ENCODE measurements at regions of chr1 and their contacts with region 1.

Region 1: GRCh38 chr1:182084487-182085316 is 23.2 kb upstream of the ZNF648 start:
- DNase-seq: peak; percentile 61 to 96 (median 90)
- H3K4me3 ChIP-seq: peak overlapping the region in 13 of 59 donors; percentile 1 to 37 (median 9)
- H3K27ac ChIP-seq: peak overlapping the region in 55 of 59 donors; percentile 17 to 88 (median 71)
- H3K27me3 ChIP-seq: no peaks in the 10 kb centered on the region
- CTCF ChIP-seq: peak; percentile 77 to 99 (median 90)

Region 2: GRCh38 chr1:182143154-182143657 is 58.5 kb after region 1 on chr1:
- intact Hi-C with region 1: loop called in 1 of 2 experiments (anchors 2 kb)
- DNase-seq: peak; percentile 86 to 96 (median 92)
- H3K4me3 ChIP-seq: peak overlapping the region in 2 of 59 donors; percentile 17 to 19
- H3K27ac ChIP-seq: peak overlapping the region; percentile 82 to 98 (median 94)
- H3K27me3 ChIP-seq: no peaks in the 10 kb centered on the region
- CTCF ChIP-seq: peak; percentile 92 to 99 (median 97)

Region 3: GRCh38 chr1:182397771-182398393 is 313.2 kb after region 1 on chr1:
- intact Hi-C with region 1: loop called (anchors 1 kb)
- DNase-seq: no peak
- H3K4me3 ChIP-seq: no peak overlapping the region
- H3K27ac ChIP-seq: peak overlapping the region in 12 of 59 donors; percentile 9 to 99 (median 80)
- H3K27me3 ChIP-seq: no peaks in the 10 kb centered on the region
- CTCF ChIP-seq: no peak

Region 4: DNA sequence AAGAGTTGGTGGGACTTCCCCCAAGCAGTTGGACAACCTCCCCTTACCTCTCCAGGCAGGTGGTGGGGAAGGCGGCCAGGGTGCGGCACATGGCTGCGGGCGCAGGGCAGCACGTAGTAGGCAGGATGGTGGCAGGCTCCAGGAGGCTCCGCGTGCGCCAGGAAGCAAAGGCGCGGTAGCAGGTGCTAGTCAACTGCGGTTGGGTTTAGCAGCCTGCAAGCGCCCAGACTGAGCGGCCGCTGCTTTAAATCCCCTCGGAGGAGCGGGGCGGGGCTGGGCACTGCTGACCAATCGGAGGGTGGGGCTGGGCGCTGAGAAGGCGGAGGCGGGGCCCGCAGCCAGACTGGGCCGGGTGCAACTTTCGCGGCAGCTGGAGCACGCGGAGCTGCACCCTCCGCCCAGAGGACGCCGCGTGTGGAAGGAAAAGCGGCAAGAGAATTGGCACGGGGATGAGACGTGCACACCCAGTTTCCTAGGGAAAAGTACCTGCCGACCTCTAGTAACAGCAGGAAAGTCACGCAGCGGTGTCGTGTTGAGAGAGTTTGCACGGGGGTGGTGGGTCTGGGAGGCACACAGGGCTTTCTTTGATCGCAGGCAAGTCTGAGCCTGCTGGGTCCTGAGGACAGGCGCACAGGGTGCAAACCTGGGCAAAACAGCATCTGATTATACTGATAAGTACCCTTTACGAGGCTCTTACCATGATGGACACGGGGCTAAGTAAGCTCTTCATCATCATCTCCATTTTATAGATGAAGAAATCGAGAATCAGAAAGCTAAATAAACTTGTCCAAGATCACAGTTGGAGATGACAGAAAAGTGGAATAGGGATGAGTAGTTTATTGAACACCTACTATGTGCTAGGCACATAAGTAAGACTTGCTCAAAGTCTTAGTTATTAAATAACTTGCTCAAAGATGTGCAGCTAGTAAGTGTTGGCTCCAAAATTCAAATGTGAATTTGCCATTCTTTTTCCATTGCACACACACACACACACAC is 519.8 kb after region 1 on chr1 and contains the start of gene RGS16:
- intact Hi-C with region 1: loop called (anchors 5 to 10 kb)
- DNase-seq: peak; percentile 77 to 94 (median 90)
- H3K4me3 ChIP-seq: peak within 1 kb of the TSS; percentile 17 to 76 (median 59)
- H3K27ac ChIP-seq: peak within 1 kb of the TSS in 20 of 59 donors; percentile 7 to 68 (median 41)
- H3K27me3 ChIP-seq: peaks cover 0 to 8% (median 0%) of the 10 kb centered on the region in 45 donors
- CTCF ChIP-seq: peak in 21 of 56 donors; percentile 3 to 47 (median 26)
- total RNA-seq, gene RGS16: 1.0 to 20.8 (median 3.8) TPM

Region 5: GRCh38 chr1:182781841-182782586 is 697.3 kb after region 1 on chr1:
- intact Hi-C with region 1: loop called (anchors 5 kb)
- DNase-seq: peak; percentile 20 to 79 (median 66)
- H3K4me3 ChIP-seq: no peak overlapping the region
- H3K27ac ChIP-seq: no peak overlapping the region
- H3K27me3 ChIP-seq: peaks cover 0 to 3% (median 0%) of the 10 kb centered on the region in 45 donors
- CTCF ChIP-seq: peak; percentile 25 to 88 (median 74)

Region 6: DNA sequence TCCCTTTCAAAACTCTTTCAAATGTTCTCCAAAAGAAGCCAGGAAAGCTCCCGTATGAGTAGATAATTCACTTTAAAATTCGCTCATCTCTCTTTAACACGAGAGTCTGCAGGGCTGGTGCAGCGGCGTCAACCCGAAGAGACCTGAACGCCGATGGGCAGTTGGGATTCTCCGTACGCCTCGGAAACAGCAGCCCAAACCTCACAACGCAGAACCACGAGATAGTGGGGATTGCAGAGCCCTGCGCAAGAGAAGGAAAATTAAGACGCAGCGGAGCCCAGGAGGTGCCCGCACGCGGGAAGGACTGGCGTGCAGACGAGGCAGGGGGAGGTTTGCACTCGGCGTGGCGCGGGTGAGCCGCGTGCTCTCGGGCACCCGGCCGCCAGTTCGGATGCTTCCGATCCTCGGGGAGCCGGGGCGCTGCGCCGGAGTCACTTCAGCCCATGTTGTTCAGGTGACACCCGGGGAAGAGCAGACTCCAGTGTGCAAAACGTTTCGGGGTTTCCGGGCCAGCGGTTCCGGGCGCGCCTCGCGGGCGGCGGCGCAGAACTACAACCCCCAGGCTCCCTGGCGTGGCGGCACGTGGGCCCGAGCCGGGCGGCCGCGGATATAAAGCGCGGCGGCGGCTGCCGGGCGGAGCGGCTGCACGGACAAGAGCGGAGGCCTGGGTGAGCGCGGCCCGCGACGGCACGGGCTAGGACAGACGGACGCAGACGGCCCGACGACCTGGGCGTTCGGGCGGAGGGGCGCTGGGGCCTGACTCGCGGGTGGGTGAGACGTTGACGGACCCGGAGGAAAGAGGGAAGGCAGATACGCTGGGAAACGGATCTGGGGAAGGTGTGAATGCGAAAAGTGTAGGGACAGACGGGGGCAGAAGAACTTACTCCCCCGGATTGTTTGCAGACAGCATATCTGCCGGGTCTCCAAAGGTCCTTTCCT is 704.7 kb after region 1 on chr1 and contains the start of gene NPL:
- intact Hi-C with region 1: loop called (anchors 5 kb)
- DNase-seq: peak; percentile 66 to 93 (median 81)
- H3K4me3 ChIP-seq: peak within 1 kb of the TSS; percentile 50 to 94 (median 76)
- H3K27ac ChIP-seq: peak within 1 kb of the TSS in 58 of 59 donors; percentile 6 to 90 (median 76)
- H3K27me3 ChIP-seq: no peaks in the 10 kb centered on the region
- CTCF ChIP-seq: peak in 37 of 56 donors; percentile 9 to 62 (median 26)
- total RNA-seq, gene NPL: 12.3 to 58.6 (median 25.0) TPM